ENCODE measurements at regions of chr7 and their contacts with region 1.

Region 1: DNA sequence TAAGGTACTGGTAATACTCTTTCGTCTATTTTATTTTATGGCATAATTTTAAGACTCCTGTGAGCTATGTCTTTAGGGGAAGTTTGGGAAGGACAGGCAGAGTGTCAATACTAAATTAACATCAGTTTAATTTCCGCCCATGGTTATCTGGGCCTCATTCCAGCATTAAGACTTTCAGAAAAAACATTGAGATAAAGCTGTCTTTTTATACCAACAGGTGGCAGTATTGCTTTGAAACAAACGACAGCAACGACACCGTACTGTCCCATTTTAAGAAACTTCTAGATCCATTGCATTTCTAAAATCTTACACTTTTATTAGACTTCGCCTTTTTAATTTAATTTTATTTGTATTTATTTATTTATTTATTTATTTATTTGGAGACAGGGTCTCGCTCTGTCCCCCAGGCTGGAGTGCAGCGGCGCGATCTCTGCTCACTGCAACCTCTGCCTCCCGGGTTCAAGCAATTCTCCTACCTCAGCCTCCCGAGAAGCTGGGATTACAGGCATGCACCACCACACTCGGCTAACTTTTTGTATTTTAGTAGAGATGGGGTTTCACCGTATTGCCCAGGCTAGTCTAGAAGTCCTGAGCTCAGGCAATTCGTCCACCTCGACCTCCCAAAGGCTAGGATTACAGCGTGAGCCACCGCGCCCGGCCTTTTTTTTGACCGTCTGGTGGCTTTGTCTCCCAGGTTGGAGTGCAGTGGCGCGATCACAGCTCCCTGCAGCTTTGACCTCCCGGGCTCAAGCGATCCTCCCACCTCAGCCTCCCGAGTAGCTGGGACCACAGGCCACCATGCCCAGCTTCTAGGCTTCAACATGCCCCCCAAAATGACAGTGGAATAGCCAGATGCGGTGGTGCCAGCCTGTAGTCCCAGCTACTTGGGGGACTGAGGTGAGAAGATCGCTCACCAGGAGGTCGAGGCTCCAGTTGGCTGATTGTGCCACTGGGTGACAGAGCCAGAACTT is 78.7 kb upstream of the C1GALT1 start:
- DNase-seq: peak in 4 of 5 donors; percentile 54 to 66 (median 60)
- H3K4me3 ChIP-seq: no peak overlapping the region
- H3K4me3 Mint-ChIP-seq: peak overlapping the region in 1 of 8 donors; percentile 35
- H3K27ac ChIP-seq: no peak overlapping the region
- H3K27ac Mint-ChIP-seq: peak overlapping the region in 2 of 7 donors; percentile 14 to 75
- H3K4me1 ChIP-seq: peaks cover 15% of the 10 kb centered on the region
- H3K4me1 Mint-ChIP-seq: peaks cover 9 to 24% (median 15%) of the 10 kb centered on the region in 4 donors
- H3K27me3 ChIP-seq: no peaks in the 10 kb centered on the region
- H3K27me3 Mint-ChIP-seq: no peaks in the 10 kb centered on the region

Region 2: GRCh38 chr7:7090460-7090859 is 13.2 kb before region 1 on chr7:
- CTCF ChIA-PET with region 1: interaction called, 45 read pairs
- POLR2A ChIA-PET with region 1: no interaction called
- intact Hi-C with region 1: no loop called
- DNase-seq: no peak
- H3K4me3 ChIP-seq: no peak overlapping the region
- H3K4me3 Mint-ChIP-seq: no peak overlapping the region
- H3K27ac ChIP-seq: no peak overlapping the region
- H3K27ac Mint-ChIP-seq: no peak overlapping the region
- H3K4me1 ChIP-seq: no peaks in the 10 kb centered on the region
- H3K4me1 Mint-ChIP-seq: peaks cover 0 to 1% (median 0%) of the 10 kb centered on the region in 4 donors
- H3K27me3 ChIP-seq: no peaks in the 10 kb centered on the region
- H3K27me3 Mint-ChIP-seq: peaks cover 20 to 23% of the 10 kb centered on the region in 2 donors

Region 3: DNA sequence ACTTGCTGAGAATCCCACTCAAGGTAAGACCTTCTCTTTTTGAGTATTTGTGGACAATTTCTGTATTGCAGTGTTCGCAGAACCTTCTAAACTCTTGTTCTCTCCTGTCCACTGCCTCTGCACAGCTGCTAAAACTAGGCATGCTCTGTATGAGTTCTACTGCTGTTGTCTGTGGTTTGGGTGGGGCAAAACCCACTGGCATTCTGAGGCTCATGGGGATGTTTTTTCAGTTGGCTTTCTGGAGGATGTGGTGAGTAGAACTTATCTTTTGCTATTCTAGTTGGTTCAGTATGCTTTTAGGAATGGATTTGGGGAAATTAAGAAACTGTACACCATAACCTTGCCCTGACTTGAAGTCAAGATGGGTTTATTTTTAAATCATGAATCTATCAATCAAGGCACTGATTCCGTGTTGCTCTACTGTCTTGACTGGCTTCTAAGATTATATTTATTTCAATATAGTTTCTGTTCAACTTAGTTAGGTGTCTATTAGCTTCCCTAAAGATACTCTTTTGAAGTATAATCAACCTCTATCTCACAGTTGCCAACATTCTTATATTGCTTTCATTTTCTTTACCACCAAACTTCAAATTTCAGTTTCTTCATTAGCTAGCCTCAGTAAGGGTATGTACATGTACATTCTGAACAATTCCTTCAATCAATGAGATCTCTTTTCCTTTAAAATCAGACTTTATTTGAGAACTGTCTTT is 53.7 kb after region 1 on chr7:
- CTCF ChIA-PET with region 1: interaction called, 8 read pairs
- POLR2A ChIA-PET with region 1: interaction called, 5 read pairs
- intact Hi-C with region 1: loop called (anchors 1 kb)
- DNase-seq: peak; percentile 79 to 86 (median 80)
- H3K4me3 ChIP-seq: peak overlapping the region; percentile 12 to 53
- H3K4me3 Mint-ChIP-seq: peak overlapping the region; percentile 69 to 86 (median 81)
- H3K27ac ChIP-seq: peak overlapping the region; percentile 55
- H3K27ac Mint-ChIP-seq: peak overlapping the region; percentile 64 to 95 (median 84)
- H3K4me1 ChIP-seq: peaks cover 63% of the 10 kb centered on the region
- H3K4me1 Mint-ChIP-seq: peaks cover 41 to 70% (median 55%) of the 10 kb centered on the region in 4 donors
- H3K27me3 ChIP-seq: no peaks in the 10 kb centered on the region
- H3K27me3 Mint-ChIP-seq: no peaks in the 10 kb centered on the region

Region 4: GRCh38 chr7:7416031-7416858 is 312.6 kb after region 1 on chr7:
- CTCF ChIA-PET with region 1: interaction called, 11 read pairs
- POLR2A ChIA-PET with region 1: no interaction called
- intact Hi-C with region 1: loop called (anchors 5 kb)
- DNase-seq: peak; percentile 15 to 50 (median 33)
- H3K4me3 ChIP-seq: no peak overlapping the region
- H3K4me3 Mint-ChIP-seq: peak overlapping the region in 4 of 8 donors; percentile 16 to 35 (median 22)
- H3K27ac ChIP-seq: no peak overlapping the region
- H3K27ac Mint-ChIP-seq: peak overlapping the region; percentile 14 to 94 (median 57)
- H3K4me1 ChIP-seq: peaks cover 7% of the 10 kb centered on the region
- H3K4me1 Mint-ChIP-seq: peaks cover 6 to 12% (median 11%) of the 10 kb centered on the region in 4 donors
- H3K27me3 ChIP-seq: no peaks in the 10 kb centered on the region
- H3K27me3 Mint-ChIP-seq: peaks cover 0 to 4% of the 10 kb centered on the region in 2 donors

Region 5: DNA sequence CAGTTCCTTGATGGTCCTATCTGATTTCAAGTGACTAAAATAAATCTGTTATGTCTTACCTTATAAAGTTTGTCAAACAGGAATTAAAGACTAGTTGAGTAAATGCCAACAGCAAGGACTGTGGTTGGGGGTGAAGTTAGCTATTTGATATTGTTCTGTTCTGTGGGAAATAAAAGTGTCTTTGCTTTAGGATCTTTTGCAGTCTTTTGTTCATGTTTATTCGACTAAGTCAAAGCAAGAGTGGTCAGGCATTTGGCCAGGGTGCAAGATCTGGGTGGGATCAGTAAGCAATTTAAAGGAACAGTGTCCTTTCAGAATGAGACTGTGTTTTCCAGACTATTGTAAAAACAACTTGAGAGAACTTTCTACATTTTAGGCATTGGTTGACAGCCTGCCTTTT is 432.1 kb after region 1 on chr7 and contains the start of gene COL28A1:
- CTCF ChIA-PET with region 1: interaction called, 87 read pairs
- POLR2A ChIA-PET with region 1: interaction called, 3 read pairs
- intact Hi-C with region 1: loop called (anchors 2 kb)
- DNase-seq: no peak
- H3K4me3 ChIP-seq: no peak within 1 kb of the TSS
- H3K4me3 Mint-ChIP-seq: no peak within 1 kb of the TSS
- H3K27ac ChIP-seq: no peak within 1 kb of the TSS
- H3K27ac Mint-ChIP-seq: no peak within 1 kb of the TSS
- H3K4me1 ChIP-seq: no peaks in the 10 kb centered on the region
- H3K4me1 Mint-ChIP-seq: no peaks in the 10 kb centered on the region
- H3K27me3 ChIP-seq: no peaks in the 10 kb centered on the region
- H3K27me3 Mint-ChIP-seq: peaks cover 4 to 6% of the 10 kb centered on the region in 2 donors
- total RNA-seq, gene COL28A1: 0.15 to 0.19 TPM

Region 6: GRCh38 chr7:8217200-8218068 is 1113.8 kb after region 1 on chr7:
- CTCF ChIA-PET with region 1: interaction called, 4 read pairs
- POLR2A ChIA-PET with region 1: no interaction called
- intact Hi-C with region 1: loop called (anchors 1 kb)
- DNase-seq: peak in 4 of 5 donors; percentile 65 to 69 (median 67)
- H3K4me3 ChIP-seq: no peak overlapping the region
- H3K4me3 Mint-ChIP-seq: no peak overlapping the region
- H3K27ac ChIP-seq: no peak overlapping the region
- H3K27ac Mint-ChIP-seq: peak overlapping the region in 2 of 7 donors; percentile 26 to 47
- H3K4me1 ChIP-seq: no peaks in the 10 kb centered on the region
- H3K4me1 Mint-ChIP-seq: peaks cover 0 to 4% (median 2%) of the 10 kb centered on the region in 4 donors
- H3K27me3 ChIP-seq: no peaks in the 10 kb centered on the region
- H3K27me3 Mint-ChIP-seq: no peaks in the 10 kb centered on the region